OCI-LY7 (cell line): ENCODE measurements at regions of chr3 and their contacts with region 1.

Region 1: GRCh38 chr3:105798381-105798934 is 70.4 kb downstream of the CBLB start:
- DNase-seq: peak; percentile 90
- H3K4me3 ChIP-seq: peak overlapping the region; percentile 37
- H3K27ac ChIP-seq: peak overlapping the region; percentile 81
- H3K4me1 ChIP-seq: peaks cover 68% of the 10 kb centered on the region
- CTCF ChIP-seq: no peak

Region 2: DNA sequence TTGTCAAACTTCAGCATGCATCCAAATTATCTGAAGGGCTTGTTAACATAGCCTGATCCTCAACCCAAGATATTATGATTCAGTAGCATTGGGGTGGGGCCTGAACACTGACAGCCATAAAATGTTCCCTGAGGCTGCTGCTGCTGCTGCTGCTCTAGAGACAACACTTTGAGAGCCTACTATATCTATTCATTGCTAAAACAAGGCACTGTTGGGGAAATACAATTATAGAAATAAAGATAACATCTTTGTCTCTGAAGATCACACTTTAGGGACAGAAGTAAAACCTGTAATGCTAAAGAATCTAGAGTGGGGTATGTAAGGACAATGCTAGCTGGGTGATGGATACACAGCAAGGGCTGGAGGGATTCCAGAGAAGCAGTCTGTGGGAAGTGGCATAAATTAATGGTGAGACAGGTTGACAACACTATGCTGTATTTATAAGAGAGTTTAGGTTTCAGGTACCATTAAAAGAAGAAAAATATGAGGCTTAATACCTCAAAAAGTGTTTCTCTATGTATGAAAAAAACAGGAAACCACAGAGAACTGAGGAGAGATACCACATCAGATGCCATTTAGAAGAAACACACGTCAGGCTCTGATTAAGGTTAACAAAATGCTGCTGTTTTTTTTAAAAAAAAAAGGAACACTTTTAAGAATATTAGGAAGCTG is 45.6 kb before region 1 on chr3:
- CTCF ChIA-PET with region 1: interaction called, 3 read pairs
- POLR2A ChIA-PET with region 1: interaction called, 3 read pairs
- intact Hi-C with region 1: loop called (anchors 5 kb)
- DNase-seq: peak; percentile 26
- H3K4me3 ChIP-seq: peak overlapping the region; percentile 9
- H3K27ac ChIP-seq: peak overlapping the region; percentile 64
- H3K4me1 ChIP-seq: peaks cover 31% of the 10 kb centered on the region
- CTCF ChIP-seq: no peak

Region 3: DNA sequence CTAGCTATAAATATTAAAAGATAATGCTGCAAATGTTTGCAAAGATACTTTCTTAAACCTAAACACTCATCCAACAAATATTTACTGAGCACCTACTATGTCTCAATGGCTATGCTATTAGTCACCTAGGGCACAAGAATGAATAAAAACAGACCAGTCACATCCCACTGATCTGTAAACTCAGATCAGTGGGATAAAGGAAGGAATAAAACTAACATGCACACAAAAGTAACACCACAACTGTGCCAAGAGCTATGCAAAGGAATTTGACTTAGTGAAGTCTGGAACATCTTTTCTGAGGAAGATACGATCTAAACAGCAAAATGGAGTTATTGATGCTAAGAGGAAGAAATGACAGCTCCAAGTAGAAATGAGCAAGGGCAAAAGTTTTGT is 13.7 kb after region 1 on chr3:
- CTCF ChIA-PET with region 1: no interaction called
- POLR2A ChIA-PET with region 1: interaction called, 16 read pairs
- intact Hi-C with region 1: no loop called
- DNase-seq: no peak
- H3K4me3 ChIP-seq: no peak overlapping the region
- H3K27ac ChIP-seq: no peak overlapping the region
- H3K4me1 ChIP-seq: peaks cover 37% of the 10 kb centered on the region
- CTCF ChIP-seq: no peak

Region 4: GRCh38 chr3:105827959-105828358 is 29.5 kb after region 1 on chr3:
- CTCF ChIA-PET with region 1: no interaction called
- POLR2A ChIA-PET with region 1: interaction called, 6 read pairs
- intact Hi-C with region 1: loop called (anchors 2 kb)
- DNase-seq: no peak
- H3K4me3 ChIP-seq: no peak overlapping the region
- H3K27ac ChIP-seq: no peak overlapping the region
- H3K4me1 ChIP-seq: peaks cover 78% of the 10 kb centered on the region
- CTCF ChIP-seq: no peak

Region 5: GRCh38 chr3:105836533-105836932 is 38.1 kb after region 1 on chr3:
- CTCF ChIA-PET with region 1: no interaction called
- POLR2A ChIA-PET with region 1: interaction called, 10 read pairs
- intact Hi-C with region 1: loop called (anchors 2 kb)
- DNase-seq: peak; percentile 71
- H3K4me3 ChIP-seq: peak overlapping the region; percentile 65
- H3K27ac ChIP-seq: peak overlapping the region; percentile 77
- H3K4me1 ChIP-seq: peaks cover 77% of the 10 kb centered on the region
- CTCF ChIP-seq: peak; percentile 61